Activated CD8-positive, alpha-beta T cell treated with anti-CD3 and anti-CD28 coated beads, Interleukin-2, amount 10 ng/mL, durations not matched to agents 7 days and 5 days (primary cell): ENCODE measurements at regions of chr11 and their contacts with region 1.

Region 1: GRCh38 chr11:117426269-117426685 is 98.6 kb downstream of the CEP164 start:
- DNase-seq: peak; percentile 72
- ATAC-seq: peak; percentile 56
- H3K4me3 Mint-ChIP-seq: no peak overlapping the region
- H3K27ac Mint-ChIP-seq: no peak overlapping the region
- H3K4me1 Mint-ChIP-seq: peaks cover 5% of the 10 kb centered on the region
- H3K27me3 Mint-ChIP-seq: no peaks in the 10 kb centered on the region

Region 2: DNA sequence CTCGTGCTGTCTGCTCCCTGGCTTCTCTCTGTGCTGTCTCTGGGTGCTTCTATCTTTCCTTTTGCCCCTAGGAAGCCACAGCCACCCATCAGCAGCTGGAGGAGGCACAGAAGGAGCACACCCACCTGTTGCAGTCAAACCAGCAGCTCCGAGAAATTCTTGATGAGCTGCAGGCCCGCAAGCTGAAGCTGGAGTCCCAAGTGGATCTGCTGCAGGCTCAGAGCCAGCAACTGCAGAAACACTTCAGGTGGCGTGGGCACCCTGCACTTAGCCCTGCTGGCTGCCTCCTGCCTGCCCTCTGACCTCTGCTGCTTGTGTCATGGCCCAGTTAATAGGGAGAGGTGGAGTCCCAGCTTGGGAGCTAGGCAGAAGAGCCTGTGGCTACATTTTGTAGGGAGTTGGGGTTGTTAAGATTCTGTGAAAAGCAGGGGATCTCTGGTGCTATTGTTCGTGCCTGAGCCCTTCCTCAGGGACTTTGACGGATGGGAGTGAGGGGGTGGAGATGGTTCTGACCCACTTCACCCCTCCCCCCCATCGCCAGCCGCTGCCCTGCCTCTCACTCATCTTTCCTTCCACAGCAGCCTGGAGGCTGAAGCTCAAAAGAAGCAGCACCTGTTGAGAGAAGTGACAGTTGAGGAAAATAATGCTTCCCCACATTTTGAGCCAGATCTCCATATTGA is 30.7 kb before region 1 on chr11:
- CTCF ChIA-PET with region 1: interaction called, 16 read pairs
- POLR2A ChIA-PET with region 1: no interaction called
- DNase-seq: no peak
- ATAC-seq: no peak
- H3K4me3 Mint-ChIP-seq: no peak overlapping the region
- H3K27ac Mint-ChIP-seq: no peak overlapping the region
- H3K4me1 Mint-ChIP-seq: no peaks in the 10 kb centered on the region
- H3K27me3 Mint-ChIP-seq: no peaks in the 10 kb centered on the region

Region 3: GRCh38 chr11:117410861-117411710 is 15.2 kb before region 1 on chr11:
- CTCF ChIA-PET with region 1: interaction called, 29 read pairs
- POLR2A ChIA-PET with region 1: no interaction called
- DNase-seq: no peak
- ATAC-seq: no peak
- H3K4me3 Mint-ChIP-seq: no peak overlapping the region
- H3K27ac Mint-ChIP-seq: no peak overlapping the region
- H3K4me1 Mint-ChIP-seq: no peaks in the 10 kb centered on the region
- H3K27me3 Mint-ChIP-seq: no peaks in the 10 kb centered on the region

Region 4: GRCh38 chr11:117456027-117456720 is 29.9 kb after region 1 on chr11:
- CTCF ChIA-PET with region 1: interaction called, 12 read pairs
- POLR2A ChIA-PET with region 1: no interaction called
- DNase-seq: no peak
- ATAC-seq: peak; percentile 30
- H3K4me3 Mint-ChIP-seq: no peak overlapping the region
- H3K27ac Mint-ChIP-seq: no peak overlapping the region
- H3K4me1 Mint-ChIP-seq: no peaks in the 10 kb centered on the region
- H3K27me3 Mint-ChIP-seq: peaks cover 12% of the 10 kb centered on the region

Region 5: GRCh38 chr11:117479372-117479771 is 53.1 kb after region 1 on chr11:
- CTCF ChIA-PET with region 1: interaction called, 12 read pairs
- POLR2A ChIA-PET with region 1: no interaction called
- DNase-seq: no peak
- ATAC-seq: no peak
- H3K4me3 Mint-ChIP-seq: no peak overlapping the region
- H3K27ac Mint-ChIP-seq: no peak overlapping the region
- H3K4me1 Mint-ChIP-seq: no peaks in the 10 kb centered on the region
- H3K27me3 Mint-ChIP-seq: no peaks in the 10 kb centered on the region

Region 6: DNA sequence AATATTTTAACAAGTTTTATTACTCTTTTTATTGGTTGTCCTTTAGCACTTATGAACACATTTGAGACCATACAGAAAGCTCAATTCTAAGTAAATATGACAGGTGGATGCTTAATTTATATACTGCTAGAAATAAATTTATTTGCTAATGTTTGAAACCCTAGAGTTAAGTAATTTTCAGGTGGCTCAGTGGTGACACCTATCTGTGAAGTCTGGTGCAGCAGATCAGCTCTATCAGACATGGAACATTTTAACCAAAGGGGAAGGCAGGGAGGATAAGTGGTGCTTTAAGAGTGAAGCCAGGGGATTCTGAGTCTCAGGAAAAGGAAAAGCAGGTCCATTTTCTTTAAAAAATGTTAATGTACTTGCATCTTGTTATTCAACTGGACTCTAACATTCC is 194.9 kb after region 1 on chr11:
- CTCF ChIA-PET with region 1: interaction called, 66 read pairs
- POLR2A ChIA-PET with region 1: no interaction called
- DNase-seq: peak; percentile 26
- ATAC-seq: no peak
- H3K4me3 Mint-ChIP-seq: no peak overlapping the region
- H3K27ac Mint-ChIP-seq: no peak overlapping the region
- H3K4me1 Mint-ChIP-seq: no peaks in the 10 kb centered on the region
- H3K27me3 Mint-ChIP-seq: peaks cover 5% of the 10 kb centered on the region

Region 7: DNA sequence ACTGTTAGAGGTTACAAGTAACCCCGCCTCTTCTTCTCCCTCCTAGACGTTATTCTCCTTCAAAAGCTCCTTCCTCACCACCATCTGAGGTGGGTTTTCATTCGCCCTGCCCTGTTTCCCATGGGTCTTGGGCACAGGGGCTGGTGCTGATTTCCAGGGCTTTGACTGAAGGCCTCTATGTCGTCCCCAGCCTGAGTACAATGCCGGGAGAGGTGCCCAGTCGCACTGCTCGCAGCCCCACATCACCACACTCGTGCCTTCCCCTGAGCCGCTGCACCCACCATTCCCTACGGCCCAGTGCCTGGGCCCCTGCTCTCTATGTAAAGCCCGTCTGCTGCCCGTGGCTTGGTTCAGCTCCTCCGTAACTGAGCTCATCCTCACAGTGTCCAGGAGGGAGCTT is 201.0 kb after region 1 on chr11:
- CTCF ChIA-PET with region 1: interaction called, 66 read pairs
- POLR2A ChIA-PET with region 1: no interaction called
- DNase-seq: no peak
- ATAC-seq: no peak
- H3K4me3 Mint-ChIP-seq: no peak overlapping the region
- H3K27ac Mint-ChIP-seq: no peak overlapping the region
- H3K4me1 Mint-ChIP-seq: no peaks in the 10 kb centered on the region
- H3K27me3 Mint-ChIP-seq: no peaks in the 10 kb centered on the region